Right cardiac atrium (tissue), 5 donors: ENCODE measurements at regions of chr5 and their contacts with region 1.

Region 1: DNA sequence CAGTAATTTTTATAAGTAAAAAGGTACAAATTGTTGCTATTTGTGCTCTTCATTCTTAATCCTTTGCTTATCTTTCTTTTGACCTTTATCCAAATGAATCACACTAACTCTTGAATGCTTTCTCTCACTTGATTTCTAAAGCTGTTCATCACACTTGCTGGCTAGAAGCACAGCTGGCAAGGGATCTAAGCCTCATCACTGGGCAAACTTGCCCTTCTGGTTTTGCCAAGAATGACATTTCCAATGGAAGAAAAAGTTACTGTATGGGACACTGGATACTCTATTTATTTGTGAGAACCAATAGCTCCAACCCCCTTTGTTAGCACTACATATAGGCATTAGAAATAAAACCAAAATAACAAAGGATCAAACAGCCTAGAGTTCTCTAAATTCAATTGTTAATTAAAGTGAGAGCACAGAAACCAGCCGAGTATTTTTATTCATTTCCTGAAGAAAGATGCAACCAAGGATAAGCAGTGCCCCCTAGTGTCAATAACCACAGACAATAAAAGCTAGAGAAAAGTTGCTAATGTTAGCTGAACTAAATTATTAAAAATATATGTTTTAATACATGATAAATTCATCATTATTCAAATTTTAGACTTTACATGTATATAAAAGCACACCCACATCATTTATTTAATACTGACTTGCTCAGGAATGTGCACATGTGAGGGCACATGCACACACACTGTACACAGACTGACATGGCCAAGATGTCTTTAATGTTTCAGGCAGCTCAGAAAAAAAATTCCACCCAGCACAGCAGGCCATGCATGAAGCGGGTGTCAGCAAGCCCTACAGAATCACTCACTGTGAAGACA is 59.8 kb upstream of the POU5F2 start:
- DNase-seq: peak; percentile 20 to 33 (median 31)
- ATAC-seq: peak; percentile 68 to 79
- H3K4me3 ChIP-seq: no peak overlapping the region
- H3K27ac ChIP-seq: no peak overlapping the region
- H3K4me1 ChIP-seq: no peaks in the 10 kb centered on the region
- H3K27me3 ChIP-seq: no peaks in the 10 kb centered on the region

Region 2: GRCh38 chr5:93582677-93583438 is 218.3 kb before region 1 on chr5 and contains the start of gene NR2F1:
- intact Hi-C with region 1: loop called in 2 of 4 experiments (anchors 5 kb)
- DNase-seq: peak; percentile 79 to 83 (median 82)
- ATAC-seq: peak; percentile 70 to 79
- H3K4me3 ChIP-seq: peak within 1 kb of the TSS; percentile 94
- H3K27ac ChIP-seq: peak within 1 kb of the TSS; percentile 61
- H3K4me1 ChIP-seq: no peaks in the 10 kb centered on the region
- H3K27me3 ChIP-seq: no peaks in the 10 kb centered on the region
- total RNA-seq, gene NR2F1: 22.1 to 59.2 (median 42.6) TPM

Region 3: DNA sequence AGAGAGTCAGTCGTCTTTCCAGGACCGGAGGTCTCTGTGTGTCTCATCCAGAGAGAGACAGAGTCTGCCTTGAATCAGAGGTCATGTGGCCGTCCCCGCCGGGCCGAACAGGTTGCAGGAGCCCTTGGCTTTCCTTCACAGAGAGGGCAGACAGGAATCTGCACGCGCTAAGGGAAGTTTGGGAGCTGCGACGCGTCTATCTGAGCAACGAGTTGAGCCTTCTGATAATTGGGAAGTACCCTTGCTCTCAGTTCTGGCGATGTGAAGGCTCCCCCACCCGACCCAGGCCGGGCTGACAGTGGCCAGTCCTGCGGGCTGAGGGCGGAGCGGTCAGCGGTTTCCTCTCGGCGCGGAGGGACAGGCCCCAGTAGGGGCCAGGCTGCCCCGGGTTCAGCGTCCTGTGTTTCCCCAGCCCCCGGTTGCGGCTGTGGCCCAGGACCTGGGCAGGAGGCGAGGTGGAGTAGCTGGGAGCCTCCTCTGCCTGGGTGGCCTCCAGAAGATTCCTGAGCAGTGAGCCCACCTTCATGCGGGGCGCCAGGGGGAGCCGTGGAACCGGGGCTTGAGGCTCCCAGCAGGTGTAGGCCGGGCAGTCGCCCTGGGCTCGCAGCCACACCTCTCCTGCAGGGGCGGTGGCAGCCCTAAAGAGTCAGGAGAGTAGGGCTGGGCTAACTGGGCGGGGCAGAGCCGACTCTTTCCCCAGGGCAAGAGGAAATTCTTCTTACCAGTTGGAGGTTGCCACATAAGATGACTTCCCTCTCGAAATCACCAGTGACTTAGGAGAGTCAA is 204.3 kb before region 1 on chr5:
- intact Hi-C with region 1: loop called in 3 of 4 experiments (anchors 10 kb)
- DNase-seq: peak in 1 of 3 donors; percentile 63
- ATAC-seq: peak in 1 of 2 donors; percentile 20
- H3K4me3 ChIP-seq: no peak overlapping the region
- H3K27ac ChIP-seq: no peak overlapping the region
- H3K4me1 ChIP-seq: no peaks in the 10 kb centered on the region
- H3K27me3 ChIP-seq: no peaks in the 10 kb centered on the region

Region 4: DNA sequence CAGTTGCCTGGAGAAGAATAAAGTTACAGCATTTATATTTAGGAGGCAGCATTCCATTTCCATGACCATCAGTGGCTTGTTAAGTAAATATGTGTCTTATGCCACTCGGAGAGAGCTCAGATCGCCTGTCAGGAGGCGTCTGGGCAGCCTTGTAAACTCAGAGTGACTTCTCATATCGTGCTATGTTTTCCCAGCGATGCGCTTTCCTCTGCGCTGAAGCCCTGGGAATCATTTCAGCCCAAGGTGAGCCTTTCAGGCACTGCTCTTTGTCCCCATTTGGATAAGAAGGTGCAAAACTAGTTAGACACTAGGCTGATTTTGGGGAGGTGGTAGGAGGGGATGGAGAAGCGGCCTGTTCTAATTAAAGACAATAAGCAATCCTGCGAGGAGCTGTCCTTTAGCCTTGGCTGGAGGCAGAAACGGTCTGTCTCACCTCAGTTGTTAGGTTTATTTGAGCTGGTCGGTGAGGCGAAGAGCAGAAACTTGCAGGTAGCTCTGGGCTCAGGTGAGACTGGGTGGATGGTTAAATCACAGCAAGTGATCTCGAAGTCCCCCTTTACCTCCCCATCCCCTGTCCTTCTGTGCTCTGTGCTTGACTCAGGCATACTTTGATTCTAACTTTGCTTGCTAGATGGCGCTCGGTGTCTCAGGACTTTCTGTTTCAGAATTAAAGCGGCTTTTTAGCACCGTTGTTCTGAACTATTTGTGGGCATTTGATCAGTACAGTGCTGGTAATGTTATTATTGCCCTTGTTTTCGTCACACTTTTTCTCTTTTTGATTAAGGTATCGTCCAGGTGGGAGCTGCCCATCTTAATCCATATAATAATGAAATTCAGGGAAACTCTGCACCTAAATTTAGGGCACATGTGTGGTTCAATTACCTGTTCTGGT is 193.6 kb before region 1 on chr5:
- intact Hi-C with region 1: loop called in 2 of 4 experiments (anchors 10 kb)
- DNase-seq: peak in 1 of 3 donors; percentile 37
- ATAC-seq: peak; percentile 73 to 74
- H3K4me3 ChIP-seq: peak overlapping the region; percentile 1
- H3K27ac ChIP-seq: peak overlapping the region; percentile 34
- H3K4me1 ChIP-seq: no peaks in the 10 kb centered on the region
- H3K27me3 ChIP-seq: no peaks in the 10 kb centered on the region

Region 5: GRCh38 chr5:93850311-93850710 is 49.1 kb after region 1 on chr5:
- intact Hi-C with region 1: no loop called
- DNase-seq: no peak
- ATAC-seq: no peak
- H3K4me3 ChIP-seq: no peak overlapping the region
- H3K27ac ChIP-seq: no peak overlapping the region
- H3K4me1 ChIP-seq: no peaks in the 10 kb centered on the region
- H3K27me3 ChIP-seq: no peaks in the 10 kb centered on the region